MCF 10A (cell line): ENCODE measurements at regions of chr16 and their contacts with region 1.

Region 1: GRCh38 chr16:86563489-86564345 is 2.9 kb upstream of the FOXC2 start:
- DNase-seq: peak; percentile 88
- H3K4me3 Mint-ChIP-seq: peak overlapping the region; percentile 67
- H3K27ac Mint-ChIP-seq: peak overlapping the region; percentile 23
- H3K4me1 Mint-ChIP-seq: peaks cover 10% of the 10 kb centered on the region
- H3K27me3 Mint-ChIP-seq: no peaks in the 10 kb centered on the region
- CTCF ChIP-seq: peak; percentile 100

Region 2: GRCh38 chr16:86809458-86809981 is 245.8 kb after region 1 on chr16:
- CTCF ChIA-PET with region 1: no interaction called
- POLR2A ChIA-PET with region 1: interaction called, 3 read pairs
- intact Hi-C with region 1: loop called (anchors 1 kb)
- DNase-seq: peak; percentile 75
- H3K4me3 Mint-ChIP-seq: no peak overlapping the region
- H3K27ac Mint-ChIP-seq: no peak overlapping the region
- H3K4me1 Mint-ChIP-seq: peaks cover 9% of the 10 kb centered on the region
- H3K27me3 Mint-ChIP-seq: no peaks in the 10 kb centered on the region
- CTCF ChIP-seq: peak; percentile 27

Region 3: DNA sequence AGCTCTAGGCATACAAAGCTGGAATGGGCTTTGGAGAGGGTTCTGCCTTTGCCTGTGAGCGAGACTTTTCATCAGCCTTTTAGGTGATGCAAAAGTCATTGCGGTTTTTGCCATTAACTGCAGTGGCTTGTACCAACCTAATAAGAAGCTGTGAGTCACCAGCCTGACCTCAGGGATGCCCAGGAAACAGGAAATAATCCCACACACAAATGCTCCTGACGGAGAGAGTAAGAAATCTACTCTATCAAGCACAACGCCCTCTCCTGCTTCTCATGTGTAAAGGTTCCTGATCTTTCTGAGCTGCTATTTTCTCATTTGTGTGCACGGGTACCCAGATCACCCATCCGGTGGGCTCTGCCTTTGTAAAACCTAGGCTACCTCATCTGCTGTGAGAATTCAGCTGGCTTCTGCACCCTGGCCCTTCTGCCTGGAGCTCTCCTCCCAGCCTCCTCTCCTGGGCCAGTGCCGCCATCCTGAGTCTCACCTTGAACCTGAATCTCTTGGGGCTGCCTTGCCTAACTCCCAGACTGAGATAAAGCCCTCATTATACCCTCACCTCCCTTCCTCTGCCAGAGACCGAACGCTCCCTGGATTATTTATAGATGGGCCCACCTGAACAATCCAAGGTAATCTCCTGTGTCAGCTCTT is 453.8 kb after region 1 on chr16:
- CTCF ChIA-PET with region 1: interaction called, 5 read pairs
- POLR2A ChIA-PET with region 1: interaction called, 4 read pairs
- intact Hi-C with region 1: loop called (anchors 1 kb)
- DNase-seq: peak; percentile 93
- H3K4me3 Mint-ChIP-seq: no peak overlapping the region
- H3K27ac Mint-ChIP-seq: no peak overlapping the region
- H3K4me1 Mint-ChIP-seq: peaks cover 7% of the 10 kb centered on the region
- H3K27me3 Mint-ChIP-seq: peaks cover 18% of the 10 kb centered on the region
- CTCF ChIP-seq: peak; percentile 41

Region 4: GRCh38 chr16:87076950-87077749 is 513.4 kb after region 1 on chr16:
- CTCF ChIA-PET with region 1: interaction called, 5 read pairs
- POLR2A ChIA-PET with region 1: no interaction called
- intact Hi-C with region 1: loop called (anchors 1 kb)
- DNase-seq: peak; percentile 81
- H3K4me3 Mint-ChIP-seq: no peak overlapping the region
- H3K27ac Mint-ChIP-seq: peak overlapping the region; percentile 32
- H3K4me1 Mint-ChIP-seq: peaks cover 10% of the 10 kb centered on the region
- H3K27me3 Mint-ChIP-seq: no peaks in the 10 kb centered on the region
- CTCF ChIP-seq: peak; percentile 60

Region 5: DNA sequence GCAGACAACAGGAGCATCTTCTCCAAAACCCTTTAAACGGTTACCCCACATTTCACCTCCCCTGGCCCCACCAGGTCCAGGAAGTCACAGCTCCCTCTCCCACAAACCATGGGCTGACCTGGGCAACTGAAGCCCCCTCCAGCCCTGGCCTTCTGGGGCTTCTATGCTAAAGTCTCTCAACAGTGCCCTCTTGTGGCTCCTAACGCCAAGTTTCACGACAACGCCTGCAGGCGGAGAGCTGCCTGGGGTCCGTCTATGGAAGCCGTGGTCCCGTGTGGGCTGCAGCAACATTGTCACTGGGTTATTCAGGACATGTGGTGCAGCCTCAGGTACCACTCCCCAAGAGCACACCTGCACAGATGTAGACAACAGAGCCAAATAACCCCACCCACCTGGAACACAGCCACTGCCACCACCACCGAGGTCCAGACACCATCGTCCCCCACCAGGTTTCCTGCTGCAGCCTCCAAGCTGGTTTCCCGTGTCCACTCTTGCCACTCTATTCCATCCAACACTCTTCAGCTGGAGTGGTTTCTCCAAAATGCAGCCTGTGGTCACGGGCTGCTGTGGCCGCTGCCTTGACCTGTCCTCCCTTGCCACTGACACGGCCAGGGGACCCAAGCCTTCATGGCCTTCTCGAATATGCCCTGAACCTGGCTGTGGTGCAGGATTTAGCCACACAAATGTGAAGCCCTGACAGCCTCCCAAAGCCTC is 734.4 kb after region 1 on chr16:
- CTCF ChIA-PET with region 1: interaction called, 3 read pairs
- POLR2A ChIA-PET with region 1: interaction called, 3 read pairs
- intact Hi-C with region 1: loop called (anchors 1 kb)
- DNase-seq: peak; percentile 39
- H3K4me3 Mint-ChIP-seq: no peak overlapping the region
- H3K27ac Mint-ChIP-seq: no peak overlapping the region
- H3K4me1 Mint-ChIP-seq: no peaks in the 10 kb centered on the region
- H3K27me3 Mint-ChIP-seq: no peaks in the 10 kb centered on the region
- CTCF ChIP-seq: peak; percentile 58

Region 6: GRCh38 chr16:87765776-87766484 is 1202.2 kb after region 1 on chr16 and contains the start of gene KLHDC4:
- CTCF ChIA-PET with region 1: no interaction called
- POLR2A ChIA-PET with region 1: no interaction called
- intact Hi-C with region 1: loop called (anchors 10 kb)
- DNase-seq: peak; percentile 84
- H3K4me3 Mint-ChIP-seq: peak within 1 kb of the TSS; percentile 88
- H3K27ac Mint-ChIP-seq: peak within 1 kb of the TSS; percentile 95
- H3K4me1 Mint-ChIP-seq: peaks cover 24% of the 10 kb centered on the region
- H3K27me3 Mint-ChIP-seq: no peaks in the 10 kb centered on the region
- CTCF ChIP-seq: no peak
- total RNA-seq, gene KLHDC4: 82.9 and 106 TPM in 2 replicates